ENCODE measurements at regions of chr19 and their contacts with region 1.

Region 1: GRCh38 chr19:37906869-37907734 is at the start of gene SIPA1L3:
- DNase-seq: peak; percentile 100
- H3K4me3 ChIP-seq: peak within 1 kb of the TSS; percentile 93
- H3K27ac ChIP-seq: peak within 1 kb of the TSS; percentile 45
- H3K4me1 ChIP-seq: peaks cover 17% of the 10 kb centered on the region
- H3K27me3 ChIP-seq: no peaks in the 10 kb centered on the region
- total RNA-seq, gene SIPA1L3: 12.1 and 34.3 TPM in 2 replicates

Region 2: DNA sequence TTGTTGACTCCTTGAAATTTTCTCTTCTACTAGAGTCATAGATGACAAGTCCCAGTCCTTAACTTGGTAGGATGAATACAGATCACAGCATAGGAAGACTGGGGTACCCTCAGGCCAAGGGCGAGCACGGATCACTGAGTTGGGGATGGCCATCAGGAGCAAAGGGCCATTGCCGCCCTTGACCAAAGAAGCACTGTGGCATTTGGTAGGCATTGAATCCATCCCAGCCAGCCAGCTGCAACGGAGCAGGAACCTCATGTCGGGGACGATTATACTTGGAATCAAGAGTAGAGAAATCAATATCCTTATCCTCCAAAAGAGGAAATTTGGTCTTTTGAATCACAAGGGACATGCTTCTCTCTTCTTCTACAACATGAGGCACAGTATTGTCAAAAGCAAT is 77.6 kb before region 1 on chr19:
- in situ Hi-C with region 1: no loop called
- DNase-seq: no peak
- H3K4me3 ChIP-seq: no peak overlapping the region
- H3K27ac ChIP-seq: no peak overlapping the region
- H3K4me1 ChIP-seq: no peaks in the 10 kb centered on the region
- H3K27me3 ChIP-seq: no peaks in the 10 kb centered on the region

Region 3: DNA sequence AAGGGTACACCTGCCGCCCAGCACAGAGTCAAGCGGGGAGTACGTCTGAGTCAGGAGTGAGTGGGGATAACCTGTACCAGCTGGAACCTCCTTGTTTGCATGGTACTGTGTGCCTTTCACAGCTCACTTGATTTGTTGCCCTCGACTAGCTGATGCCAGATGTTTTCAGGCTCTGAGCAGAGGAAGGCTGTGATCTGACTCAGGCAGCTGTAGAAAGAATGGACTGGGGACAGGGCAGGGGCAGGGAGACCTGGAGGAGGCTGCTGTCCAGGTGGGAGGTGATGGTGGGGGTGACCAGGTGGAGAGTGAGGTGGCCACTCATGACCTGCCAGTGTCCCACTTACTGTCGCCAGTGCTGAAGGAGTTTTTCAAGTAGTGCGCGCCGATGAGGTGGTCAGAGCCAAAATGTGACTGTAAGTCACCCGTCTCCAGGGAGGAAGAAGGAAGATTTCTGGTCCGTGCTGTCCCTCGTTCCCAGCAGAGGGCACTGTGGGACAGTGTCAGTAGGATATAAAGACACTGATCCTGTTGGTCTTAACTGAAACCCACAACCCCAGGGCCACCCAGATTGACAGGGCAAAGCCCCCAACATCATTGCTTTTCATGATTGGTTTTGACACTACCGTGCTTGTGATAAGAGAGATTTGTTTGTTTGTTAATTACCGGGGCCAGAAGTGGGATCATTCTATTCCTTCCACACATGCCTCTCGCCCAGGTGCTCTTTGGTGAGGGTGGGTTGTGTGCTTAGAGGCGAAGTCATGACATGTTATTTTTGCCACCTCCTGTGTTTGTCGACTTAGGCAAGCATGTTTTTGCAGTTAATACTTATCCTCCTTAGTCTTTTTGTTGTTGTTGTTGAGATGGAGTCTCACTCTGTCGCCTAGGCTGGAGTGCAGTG is 188.6 kb after region 1 on chr19:
- in situ Hi-C with region 1: loop called (anchors 25 kb)
- DNase-seq: peak; percentile 81
- H3K4me3 ChIP-seq: no peak overlapping the region
- H3K27ac ChIP-seq: peak overlapping the region; percentile 21; the same call in 1 of the 2 replicates
- H3K4me1 ChIP-seq: no peaks in the 10 kb centered on the region
- H3K27me3 ChIP-seq: no peaks in the 10 kb centered on the region